ENCODE measurements at regions of chr11 and their contacts with region 1.

Region 1: GRCh38 chr11:110429731-110430266 is at the start of gene FDX1:
- DNase-seq: peak; percentile 86 to 94 (median 93)
- ATAC-seq: peak; percentile 95 to 97
- H3K4me3 ChIP-seq: peak within 1 kb of the TSS; percentile 70
- H3K27ac ChIP-seq: peak within 1 kb of the TSS; percentile 76
- H3K4me1 ChIP-seq: no peaks in the 10 kb centered on the region
- H3K27me3 ChIP-seq: no peaks in the 10 kb centered on the region
- total RNA-seq, gene FDX1: 16.3 to 18.6 (median 17.2) TPM

Region 2: DNA sequence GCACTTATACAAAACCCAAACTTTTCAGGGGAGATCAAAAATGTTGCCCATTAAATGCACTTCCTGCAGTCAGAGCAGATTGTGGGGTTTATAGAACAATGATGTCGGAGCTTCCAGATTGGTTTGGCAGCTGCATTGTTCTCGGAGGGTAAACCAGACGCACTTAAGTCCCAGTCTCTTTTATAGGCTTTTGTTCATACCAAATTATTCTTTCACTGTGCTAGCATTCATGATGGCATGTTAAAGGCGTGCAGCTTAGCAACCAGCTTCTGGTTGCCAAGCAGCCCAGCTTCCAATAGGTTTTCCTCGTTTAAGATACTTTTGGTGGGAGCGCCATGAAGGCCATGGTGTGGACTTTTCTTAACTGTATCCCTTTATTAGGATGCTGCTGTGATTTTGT is 295.7 kb before region 1 on chr11:
- intact Hi-C with region 1: no loop called
- DNase-seq: no peak
- ATAC-seq: no peak
- H3K4me3 ChIP-seq: no peak overlapping the region
- H3K27ac ChIP-seq: no peak overlapping the region
- H3K4me1 ChIP-seq: no peaks in the 10 kb centered on the region
- H3K27me3 ChIP-seq: no peaks in the 10 kb centered on the region

Region 3: DNA sequence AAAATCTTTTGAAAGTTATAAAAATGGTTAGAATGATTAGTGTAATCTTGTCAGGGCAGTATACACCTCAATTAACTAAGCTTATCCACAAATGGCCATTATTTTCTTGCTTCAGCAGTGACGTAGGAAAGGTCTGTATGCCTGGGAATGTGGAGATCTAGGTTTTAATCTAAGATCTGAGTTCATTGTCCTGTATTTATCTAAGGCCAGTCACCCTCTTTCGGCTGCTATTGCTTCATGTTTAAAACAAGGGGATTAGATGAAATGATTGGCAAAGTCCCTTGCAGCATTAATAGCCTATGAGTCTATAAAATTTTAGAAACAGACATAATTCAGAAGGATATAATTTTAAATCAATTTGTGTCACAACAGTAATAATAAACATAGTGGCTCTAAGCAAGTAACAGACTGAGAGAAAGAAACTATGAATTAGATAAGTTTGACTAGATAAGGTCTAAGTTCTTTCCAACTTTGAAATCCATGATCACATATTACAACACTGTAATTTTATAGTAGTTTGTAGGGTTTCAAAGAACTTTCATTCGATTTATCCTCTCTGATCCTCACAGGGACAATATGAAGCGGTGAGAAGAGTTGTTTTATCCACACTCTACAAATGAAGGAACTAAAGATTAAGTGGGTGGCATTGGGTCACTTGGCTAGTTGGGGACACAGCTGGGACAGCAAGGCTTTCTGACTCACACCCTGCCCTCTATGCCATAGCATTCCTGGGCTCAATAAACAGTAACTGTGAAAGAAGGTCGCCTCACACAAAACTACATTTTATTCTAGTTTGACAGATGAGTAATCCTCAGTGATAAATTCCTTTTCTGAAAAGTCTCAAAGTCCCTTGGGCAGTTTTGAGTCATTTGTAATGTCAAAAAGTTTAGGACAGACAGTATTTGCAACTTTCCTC is 72.8 kb before region 1 on chr11:
- intact Hi-C with region 1: no loop called
- DNase-seq: no peak
- ATAC-seq: peak; percentile 39 to 43
- H3K4me3 ChIP-seq: no peak overlapping the region
- H3K27ac ChIP-seq: no peak overlapping the region
- H3K4me1 ChIP-seq: peaks cover under 1% of the 10 kb centered on the region
- H3K27me3 ChIP-seq: no peaks in the 10 kb centered on the region

Region 4: DNA sequence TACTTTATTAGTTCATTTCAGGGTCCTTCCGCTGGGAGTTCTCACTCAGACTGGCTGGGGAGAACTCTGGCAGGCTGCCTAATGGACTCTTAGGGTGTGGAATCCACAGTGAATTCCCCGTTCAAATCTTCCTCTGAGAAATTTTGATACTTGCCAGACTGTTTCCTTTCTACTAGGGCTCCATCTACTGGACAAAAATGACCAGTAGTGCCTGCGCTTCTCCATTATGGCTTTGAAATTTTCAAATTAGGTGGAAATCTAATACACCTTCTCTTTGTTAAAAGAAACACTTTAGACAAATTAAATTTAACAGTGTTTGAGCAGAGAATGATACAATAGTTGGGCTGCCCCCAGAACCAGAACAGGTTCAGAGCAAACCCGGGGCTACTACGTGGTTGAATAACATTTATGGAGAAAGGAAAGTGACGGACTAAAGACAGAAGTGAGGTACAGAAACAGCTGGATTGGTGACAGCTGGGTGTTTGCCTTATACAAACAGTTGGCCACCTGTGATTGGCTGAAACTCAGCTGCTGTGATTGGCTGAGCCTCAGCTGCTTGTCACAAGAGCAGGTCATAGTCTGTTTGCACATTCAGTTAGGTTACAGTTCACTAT is 53.0 kb before region 1 on chr11:
- intact Hi-C with region 1: loop called in 2 of 4 experiments (anchors 5 to 10 kb)
- DNase-seq: peak; percentile 82 to 87 (median 83)
- ATAC-seq: peak; percentile 91 to 94
- H3K4me3 ChIP-seq: no peak overlapping the region
- H3K27ac ChIP-seq: no peak overlapping the region
- H3K4me1 ChIP-seq: peaks cover 1% of the 10 kb centered on the region
- H3K27me3 ChIP-seq: no peaks in the 10 kb centered on the region

Region 5: GRCh38 chr11:111494040-111494439 is 1064.2 kb after region 1 on chr11:
- intact Hi-C with region 1: no loop called
- DNase-seq: no peak
- ATAC-seq: no peak
- H3K4me3 ChIP-seq: no peak overlapping the region
- H3K27ac ChIP-seq: no peak overlapping the region
- H3K4me1 ChIP-seq: no peaks in the 10 kb centered on the region
- H3K27me3 ChIP-seq: no peaks in the 10 kb centered on the region